ENCODE measurements at regions of chr17 and their contacts with region 1.

Region 1: DNA sequence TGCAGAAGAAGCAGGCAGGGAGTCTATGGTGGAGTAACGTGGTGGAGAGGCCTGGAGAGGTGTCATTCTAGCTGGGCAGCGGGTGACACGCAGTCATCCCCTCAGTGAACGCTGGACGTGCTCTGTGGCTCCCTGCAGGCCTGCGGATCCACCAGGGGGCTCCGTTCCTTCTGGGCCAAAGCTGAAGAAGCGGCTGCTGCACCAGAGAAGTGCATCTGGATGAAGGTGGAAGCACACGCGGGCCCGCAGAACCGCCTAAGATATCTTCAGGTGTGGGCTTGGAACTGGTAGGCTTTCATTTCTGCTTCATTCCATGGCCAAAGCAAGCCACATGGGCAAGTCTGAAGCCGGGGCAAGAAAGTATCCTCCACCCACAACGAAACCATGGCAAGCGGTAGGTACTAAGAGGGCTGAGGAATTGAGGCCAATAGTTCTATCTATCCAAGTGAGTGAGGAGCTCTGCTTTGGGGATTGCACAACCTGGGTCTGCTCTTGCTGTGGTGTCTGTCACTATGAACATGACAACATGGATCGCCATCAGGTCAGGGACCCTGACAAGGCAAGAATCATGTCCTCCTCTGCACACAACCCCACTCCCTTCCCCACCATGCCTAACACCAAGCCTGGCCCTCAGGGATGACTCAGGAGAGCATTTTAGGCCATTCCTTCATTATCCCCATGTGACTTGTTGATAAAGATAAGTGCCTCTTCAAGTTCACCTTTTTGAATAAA is 78.9 kb upstream of the FBXO47 start:
- DNase-seq: no peak

Region 2: GRCh38 chr17:38943607-38944006 is 102.5 kb before region 1 on chr17:
- intact Hi-C with region 1: no loop called
- DNase-seq: no peak

Region 3: DNA sequence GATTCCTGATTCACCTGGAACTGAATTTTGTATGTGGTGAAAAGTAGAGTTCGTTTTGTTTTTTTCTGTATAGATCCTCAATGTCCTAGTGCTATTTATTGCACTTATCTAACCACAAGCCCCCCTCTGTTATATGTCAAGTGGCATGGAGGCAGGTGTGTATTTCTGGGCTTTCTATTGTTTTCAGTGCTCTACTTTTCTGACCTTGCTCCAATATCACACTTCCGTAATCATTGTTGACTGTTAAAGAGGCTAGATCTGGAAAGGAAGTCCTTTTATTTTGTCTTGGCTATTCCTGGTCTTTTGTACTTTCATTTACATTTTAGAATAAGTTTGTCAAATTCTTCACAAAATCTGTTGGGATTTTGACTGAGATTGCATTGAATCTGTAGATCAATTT is 52.1 kb before region 1 on chr17:
- intact Hi-C with region 1: loop called (anchors 10 kb)
- DNase-seq: no peak